Prostate gland (tissue), 2 donors: ENCODE measurements at regions of chr5 and their contacts with region 1.

Region 1: GRCh38 chr5:64505769-64506566 is at the start of gene RGS7BP:
- DNase-seq: peak; percentile 26
- H3K4me3 ChIP-seq: peak within 1 kb of the TSS; percentile 36 to 48
- H3K27ac ChIP-seq: peak within 1 kb of the TSS; percentile 52 to 66
- H3K4me1 ChIP-seq: no peaks in the 10 kb centered on the region
- H3K27me3 ChIP-seq: no peaks in the 10 kb centered on the region
- CTCF ChIP-seq: peak in 1 of 4 experiments; percentile 31
- POLR2A ChIP-seq: no peak
- total RNA-seq, gene RGS7BP: 3.7 to 7.3 TPM

Region 2: GRCh38 chr5:64161420-64161819 is 344.5 kb before region 1 on chr5:
- intact Hi-C with region 1: loop called (anchors 5 kb)
- DNase-seq: no peak
- H3K4me3 ChIP-seq: no peak overlapping the region
- H3K27ac ChIP-seq: no peak overlapping the region
- H3K4me1 ChIP-seq: no peaks in the 10 kb centered on the region
- H3K27me3 ChIP-seq: no peaks in the 10 kb centered on the region
- CTCF ChIP-seq: no peak
- POLR2A ChIP-seq: no peak

Region 3: GRCh38 chr5:64229163-64229774 is 276.7 kb before region 1 on chr5:
- intact Hi-C with region 1: loop called (anchors 10 kb)
- DNase-seq: no peak
- H3K4me3 ChIP-seq: no peak overlapping the region
- H3K27ac ChIP-seq: no peak overlapping the region
- H3K4me1 ChIP-seq: no peaks in the 10 kb centered on the region
- H3K27me3 ChIP-seq: no peaks in the 10 kb centered on the region
- CTCF ChIP-seq: peak; percentile 25 to 72 (median 67)
- POLR2A ChIP-seq: no peak

Region 4: GRCh38 chr5:64595031-64595855 is 89.3 kb after region 1 on chr5:
- intact Hi-C with region 1: loop called (anchors 2 kb)
- DNase-seq: no peak
- H3K4me3 ChIP-seq: no peak overlapping the region
- H3K27ac ChIP-seq: no peak overlapping the region
- H3K4me1 ChIP-seq: no peaks in the 10 kb centered on the region
- H3K27me3 ChIP-seq: no peaks in the 10 kb centered on the region
- CTCF ChIP-seq: peak in 2 of 4 experiments; percentile 22 to 38
- POLR2A ChIP-seq: no peak

Region 5: GRCh38 chr5:64612344-64612961 is 106.5 kb after region 1 on chr5:
- intact Hi-C with region 1: loop called (anchors 2 kb)
- DNase-seq: peak; percentile 48
- H3K4me3 ChIP-seq: no peak overlapping the region
- H3K27ac ChIP-seq: no peak overlapping the region
- H3K4me1 ChIP-seq: no peaks in the 10 kb centered on the region
- H3K27me3 ChIP-seq: no peaks in the 10 kb centered on the region
- CTCF ChIP-seq: peak; percentile 33 to 71 (median 55)
- POLR2A ChIP-seq: no peak

Region 6: GRCh38 chr5:64754066-64754465 is 248.1 kb after region 1 on chr5:
- intact Hi-C with region 1: no loop called
- DNase-seq: no peak
- H3K4me3 ChIP-seq: no peak overlapping the region
- H3K27ac ChIP-seq: no peak overlapping the region
- H3K4me1 ChIP-seq: no peaks in the 10 kb centered on the region
- H3K27me3 ChIP-seq: no peaks in the 10 kb centered on the region
- CTCF ChIP-seq: no peak
- POLR2A ChIP-seq: no peak

Region 7: GRCh38 chr5:64768358-64769312 is 262.7 kb after region 1 on chr5 and contains the starts of genes CWC27 and SREK1IP1:
- intact Hi-C with region 1: loop called (anchors 10 kb)
- DNase-seq: peak; percentile 74
- H3K4me3 ChIP-seq: peak within 1 kb of the TSS; percentile 70 to 83
- H3K27ac ChIP-seq: peak within 1 kb of the TSS; percentile 82 to 89
- H3K4me1 ChIP-seq: peaks cover 11% of the 10 kb centered on the region
- H3K27me3 ChIP-seq: no peaks in the 10 kb centered on the region
- CTCF ChIP-seq: peak in 2 of 4 experiments; percentile 22 to 37
- POLR2A ChIP-seq: peak; percentile 44
- total RNA-seq, gene CWC27: 8.5 to 12.5 TPM
- total RNA-seq, gene SREK1IP1: 16.0 to 19.5 TPM

Region 8: GRCh38 chr5:64971513-64971912 is 465.5 kb after region 1 on chr5:
- intact Hi-C with region 1: no loop called
- DNase-seq: no peak
- H3K4me3 ChIP-seq: no peak overlapping the region
- H3K27ac ChIP-seq: no peak overlapping the region
- H3K4me1 ChIP-seq: no peaks in the 10 kb centered on the region
- H3K27me3 ChIP-seq: no peaks in the 10 kb centered on the region
- CTCF ChIP-seq: no peak
- POLR2A ChIP-seq: no peak

Region 9: DNA sequence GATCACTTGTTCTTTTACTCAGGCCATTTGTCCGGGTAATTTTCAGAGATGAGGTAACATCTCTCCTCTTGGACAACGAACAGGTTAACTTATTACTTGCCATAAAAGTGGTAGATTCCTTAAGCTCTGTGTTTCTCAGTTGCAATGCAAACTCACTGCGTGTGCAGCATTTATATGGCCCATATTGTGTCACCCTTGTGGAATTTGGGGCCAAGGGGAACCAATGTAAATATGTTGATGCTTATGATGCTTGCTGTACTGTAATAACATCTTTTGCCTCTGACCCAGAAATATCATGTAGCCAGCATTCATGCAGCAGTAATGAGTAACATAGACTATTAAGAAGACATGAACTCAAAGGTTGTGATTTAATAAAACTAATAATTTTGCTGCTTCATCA is 799.9 kb after region 1 on chr5:
- intact Hi-C with region 1: no loop called
- DNase-seq: no peak
- H3K4me3 ChIP-seq: no peak overlapping the region
- H3K27ac ChIP-seq: no peak overlapping the region
- H3K4me1 ChIP-seq: no peaks in the 10 kb centered on the region
- H3K27me3 ChIP-seq: no peaks in the 10 kb centered on the region
- CTCF ChIP-seq: no peak
- POLR2A ChIP-seq: no peak